ENCODE measurements at regions of chr9 and their contacts with region 1.

Region 1: GRCh38 chr9:34126207-34127034 is at the start of gene DCAF12:
- DNase-seq: peak; percentile 86 to 93 (median 92)
- H3K4me3 ChIP-seq: peak within 1 kb of the TSS; percentile 85 to 94 (median 86)
- H3K4me3 Mint-ChIP-seq: peak within 1 kb of the TSS; percentile 92
- H3K27ac ChIP-seq: peak within 1 kb of the TSS; percentile 71 to 83
- H3K27ac Mint-ChIP-seq: peak within 1 kb of the TSS; percentile 94 to 98 (median 97)
- H3K4me1 ChIP-seq: peaks cover 32 to 42% of the 10 kb centered on the region in 2 donors
- H3K4me1 Mint-ChIP-seq: peaks cover 44% of the 10 kb centered on the region
- H3K27me3 ChIP-seq: no peaks in the 10 kb centered on the region
- H3K27me3 Mint-ChIP-seq: peaks cover 0 to 6% (median 0%) of the 10 kb centered on the region in 3 donors
- CTCF ChIP-seq: no peak
- polyA plus RNA-seq, gene DCAF12: 14.6 to 35.5 (median 22.4) TPM

Region 2: DNA sequence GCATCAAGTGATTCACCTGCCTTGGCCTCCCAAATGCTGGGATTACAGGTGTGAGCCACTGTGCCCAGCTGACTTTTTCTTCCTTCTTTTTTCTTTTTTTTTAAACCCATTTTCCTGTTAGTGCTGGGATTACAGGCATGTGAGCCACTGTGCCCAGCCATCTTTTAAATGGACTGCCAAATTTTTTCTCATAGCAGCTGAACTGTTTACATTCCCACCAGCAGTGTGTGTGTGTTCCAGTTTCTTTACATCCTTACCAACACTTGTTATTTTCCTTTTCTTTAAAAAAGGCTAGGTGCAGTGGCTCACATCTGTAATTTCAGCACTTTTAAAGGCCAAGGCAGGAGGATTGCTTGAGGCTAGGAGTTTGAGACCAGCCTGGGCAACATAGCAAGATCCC is 232.6 kb before region 1 on chr9:
- intact Hi-C with region 1: no loop called
- DNase-seq: no peak
- H3K4me3 ChIP-seq: no peak overlapping the region
- H3K4me3 Mint-ChIP-seq: no peak overlapping the region
- H3K27ac ChIP-seq: no peak overlapping the region
- H3K27ac Mint-ChIP-seq: no peak overlapping the region
- H3K4me1 ChIP-seq: no peaks in the 10 kb centered on the region
- H3K4me1 Mint-ChIP-seq: peaks cover 2% of the 10 kb centered on the region
- H3K27me3 ChIP-seq: no peaks in the 10 kb centered on the region
- H3K27me3 Mint-ChIP-seq: no peaks in the 10 kb centered on the region
- CTCF ChIP-seq: no peak

Region 3: DNA sequence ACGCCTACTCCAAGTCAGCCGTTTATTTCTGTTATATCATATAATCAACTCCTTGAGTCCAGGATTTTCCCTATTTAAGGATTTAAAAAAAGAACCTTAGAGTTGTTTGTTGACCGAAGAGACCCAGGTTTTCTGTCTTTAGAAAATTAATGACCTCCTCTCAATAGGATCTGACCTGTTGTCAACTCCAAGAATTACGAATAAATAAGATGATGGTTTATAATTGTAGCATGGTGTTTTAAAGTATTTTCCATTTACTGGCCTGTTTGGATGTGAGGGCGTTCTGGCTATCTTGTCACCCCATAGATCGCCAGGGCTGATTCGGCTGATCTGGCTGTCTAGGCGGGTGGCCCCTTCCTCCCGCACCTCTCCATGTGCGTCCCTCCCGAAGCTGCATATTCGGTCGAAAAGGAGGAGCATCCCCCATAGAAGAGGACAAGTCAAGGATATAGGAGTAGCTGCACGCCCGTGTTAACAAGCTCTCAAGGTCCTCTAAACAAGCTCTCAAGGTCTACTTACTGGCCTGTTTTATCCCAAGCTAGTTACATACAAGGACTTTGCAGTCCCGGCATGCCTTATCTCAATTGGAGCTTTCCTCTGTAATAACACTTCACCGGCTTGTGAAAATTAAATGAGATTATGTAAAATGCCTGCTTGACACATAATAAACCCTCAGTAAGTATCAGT is 76.6 kb before region 1 on chr9:
- intact Hi-C with region 1: loop called in 1 of 2 experiments (anchors 10 kb)
- DNase-seq: no peak
- H3K4me3 ChIP-seq: peak overlapping the region; percentile 59 to 98 (median 96)
- H3K4me3 Mint-ChIP-seq: peak overlapping the region; percentile 97 to 99
- H3K27ac ChIP-seq: peak overlapping the region in 1 of 2 donors; percentile 99
- H3K27ac Mint-ChIP-seq: peak overlapping the region; percentile 42 to 100 (median 100)
- H3K4me1 ChIP-seq: peaks cover 23 to 31% of the 10 kb centered on the region in 2 donors
- H3K4me1 Mint-ChIP-seq: peaks cover 26% of the 10 kb centered on the region
- H3K27me3 ChIP-seq: no peaks in the 10 kb centered on the region
- H3K27me3 Mint-ChIP-seq: peaks cover 0 to 1% (median 0%) of the 10 kb centered on the region in 3 donors
- CTCF ChIP-seq: no peak

Region 4: DNA sequence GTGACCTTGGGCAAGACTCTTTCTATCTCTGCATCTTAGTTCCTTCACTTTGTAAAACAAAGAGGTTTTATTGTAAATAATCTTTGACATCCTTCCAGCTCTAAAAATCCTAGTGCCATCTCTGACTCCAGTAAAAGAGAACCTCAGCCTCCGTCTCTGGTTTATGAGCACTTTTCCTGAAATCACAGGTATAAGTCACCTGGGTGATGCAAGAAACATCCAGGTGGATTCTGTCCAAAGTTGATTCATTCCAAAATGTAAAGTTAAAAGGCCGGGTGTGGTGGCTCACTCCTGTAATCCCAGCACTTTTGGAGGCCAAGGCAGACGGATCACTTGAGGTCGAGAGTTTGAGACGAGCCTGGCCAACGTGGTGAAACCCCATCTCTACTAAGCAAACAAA is 56.6 kb before region 1 on chr9:
- intact Hi-C with region 1: no loop called
- DNase-seq: no peak
- H3K4me3 ChIP-seq: no peak overlapping the region
- H3K4me3 Mint-ChIP-seq: no peak overlapping the region
- H3K27ac ChIP-seq: no peak overlapping the region
- H3K27ac Mint-ChIP-seq: no peak overlapping the region
- H3K4me1 ChIP-seq: no peaks in the 10 kb centered on the region
- H3K4me1 Mint-ChIP-seq: no peaks in the 10 kb centered on the region
- H3K27me3 ChIP-seq: no peaks in the 10 kb centered on the region
- H3K27me3 Mint-ChIP-seq: peaks cover 0 to 4% (median 0%) of the 10 kb centered on the region in 3 donors
- CTCF ChIP-seq: no peak

Region 5: DNA sequence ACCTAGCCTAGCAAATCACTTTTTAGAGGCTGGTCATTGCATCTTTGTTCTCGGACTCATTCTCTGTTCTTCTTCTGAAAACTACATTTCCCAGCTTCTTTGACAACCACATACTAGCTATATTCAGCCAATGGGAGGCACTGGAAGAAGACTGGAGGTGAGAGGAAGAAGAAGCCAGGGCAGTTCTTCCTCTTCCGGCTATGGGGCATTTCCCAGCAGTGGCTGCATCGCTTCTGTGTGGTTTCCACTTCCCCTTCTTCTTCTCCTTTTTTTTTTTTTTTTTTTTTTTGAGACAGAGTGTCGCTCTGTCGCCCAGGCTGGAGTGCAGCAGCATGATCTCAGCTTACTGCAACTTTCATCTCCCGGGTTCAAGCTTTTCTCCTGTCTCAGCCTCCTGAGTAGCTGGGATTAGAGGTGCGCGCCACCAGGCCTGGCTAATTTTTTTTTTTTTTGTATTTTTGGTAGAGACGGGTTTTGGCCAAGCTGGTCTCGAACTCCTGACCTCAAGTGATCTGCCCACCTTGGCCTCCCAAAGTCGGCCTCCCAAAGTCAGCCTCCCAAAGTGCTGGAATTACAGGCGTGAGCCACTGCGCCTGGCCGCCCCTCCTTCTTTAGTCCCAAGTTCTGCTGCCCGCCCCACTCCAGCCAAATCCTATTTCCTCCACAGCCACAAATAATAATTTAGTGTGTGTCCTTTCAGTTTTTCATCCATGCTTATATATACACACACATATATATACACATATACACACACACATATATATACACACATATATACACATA is 45.5 kb after region 1 on chr9:
- intact Hi-C with region 1: loop called (anchors 2 to 5 kb)
- DNase-seq: peak; percentile 89 to 95 (median 95)
- H3K4me3 ChIP-seq: peak overlapping the region in 1 of 3 experiments; percentile 46
- H3K4me3 Mint-ChIP-seq: peak overlapping the region; percentile 39 to 61
- H3K27ac ChIP-seq: peak overlapping the region; percentile 34 to 52
- H3K27ac Mint-ChIP-seq: peak overlapping the region; percentile 63 to 93 (median 85)
- H3K4me1 ChIP-seq: peaks cover 19 to 21% of the 10 kb centered on the region in 2 donors
- H3K4me1 Mint-ChIP-seq: peaks cover 19% of the 10 kb centered on the region
- H3K27me3 ChIP-seq: no peaks in the 10 kb centered on the region
- H3K27me3 Mint-ChIP-seq: peaks cover 0 to 9% (median 2%) of the 10 kb centered on the region in 3 donors
- CTCF ChIP-seq: no peak

Region 6: GRCh38 chr9:34190996-34191892 is 64.8 kb after region 1 on chr9:
- intact Hi-C with region 1: loop called in 1 of 2 experiments (anchors 5 kb)
- DNase-seq: no peak
- H3K4me3 ChIP-seq: no peak overlapping the region
- H3K4me3 Mint-ChIP-seq: no peak overlapping the region
- H3K27ac ChIP-seq: peak overlapping the region in 1 of 2 donors; percentile 21
- H3K27ac Mint-ChIP-seq: peak overlapping the region in 5 of 7 donors; percentile 30 to 70 (median 57)
- H3K4me1 ChIP-seq: peaks cover 21 to 31% of the 10 kb centered on the region in 2 donors
- H3K4me1 Mint-ChIP-seq: peaks cover 35% of the 10 kb centered on the region
- H3K27me3 ChIP-seq: no peaks in the 10 kb centered on the region
- H3K27me3 Mint-ChIP-seq: no peaks in the 10 kb centered on the region
- CTCF ChIP-seq: no peak

Region 7: DNA sequence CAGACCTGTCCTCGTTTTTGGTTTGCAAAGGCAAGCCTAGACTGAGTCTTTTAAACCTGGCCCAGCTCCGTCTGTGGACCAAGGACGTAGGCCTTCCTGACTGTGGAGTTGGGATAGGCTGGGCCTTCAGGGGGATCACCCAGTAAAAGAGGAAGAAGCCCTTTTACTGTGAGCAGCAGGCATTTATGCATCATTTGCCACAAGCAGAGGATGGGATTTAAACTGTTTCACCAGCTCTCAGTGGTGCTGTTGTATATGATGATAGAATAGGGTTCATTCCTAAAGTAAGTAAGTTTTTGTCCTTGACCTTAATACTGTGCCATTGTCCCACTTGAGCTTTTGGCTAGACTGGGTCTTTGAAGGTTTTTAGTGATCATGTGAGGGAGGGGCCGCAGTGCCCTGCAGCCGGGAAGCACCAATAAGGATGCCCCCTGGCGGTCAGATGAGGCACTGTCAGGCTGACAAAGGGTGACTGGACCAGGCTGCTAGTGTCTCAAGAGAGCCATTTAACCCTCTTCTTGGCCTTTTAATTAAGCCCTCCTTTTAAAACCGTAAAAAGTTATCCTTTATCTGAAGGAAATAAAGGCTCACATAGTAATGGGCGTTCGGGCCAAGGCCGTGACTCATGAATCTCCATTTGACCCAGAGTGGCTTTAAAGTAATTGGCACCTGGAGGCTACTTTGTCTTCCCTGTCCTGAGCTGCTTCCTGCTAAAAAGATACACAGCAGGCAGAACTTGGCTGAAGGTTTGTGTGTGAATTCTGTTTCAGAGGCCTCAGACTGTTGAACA is 126.4 kb after region 1 on chr9:
- intact Hi-C with region 1: loop called (anchors 10 kb)
- DNase-seq: peak; percentile 44 to 66 (median 62)
- H3K4me3 ChIP-seq: no peak overlapping the region
- H3K4me3 Mint-ChIP-seq: no peak overlapping the region
- H3K27ac ChIP-seq: peak overlapping the region in 1 of 2 donors; percentile 56
- H3K27ac Mint-ChIP-seq: peak overlapping the region; percentile 48 to 83 (median 65)
- H3K4me1 ChIP-seq: no peaks in the 10 kb centered on the region
- H3K4me1 Mint-ChIP-seq: no peaks in the 10 kb centered on the region
- H3K27me3 ChIP-seq: no peaks in the 10 kb centered on the region
- H3K27me3 Mint-ChIP-seq: no peaks in the 10 kb centered on the region
- CTCF ChIP-seq: peak; percentile 88

Region 8: DNA sequence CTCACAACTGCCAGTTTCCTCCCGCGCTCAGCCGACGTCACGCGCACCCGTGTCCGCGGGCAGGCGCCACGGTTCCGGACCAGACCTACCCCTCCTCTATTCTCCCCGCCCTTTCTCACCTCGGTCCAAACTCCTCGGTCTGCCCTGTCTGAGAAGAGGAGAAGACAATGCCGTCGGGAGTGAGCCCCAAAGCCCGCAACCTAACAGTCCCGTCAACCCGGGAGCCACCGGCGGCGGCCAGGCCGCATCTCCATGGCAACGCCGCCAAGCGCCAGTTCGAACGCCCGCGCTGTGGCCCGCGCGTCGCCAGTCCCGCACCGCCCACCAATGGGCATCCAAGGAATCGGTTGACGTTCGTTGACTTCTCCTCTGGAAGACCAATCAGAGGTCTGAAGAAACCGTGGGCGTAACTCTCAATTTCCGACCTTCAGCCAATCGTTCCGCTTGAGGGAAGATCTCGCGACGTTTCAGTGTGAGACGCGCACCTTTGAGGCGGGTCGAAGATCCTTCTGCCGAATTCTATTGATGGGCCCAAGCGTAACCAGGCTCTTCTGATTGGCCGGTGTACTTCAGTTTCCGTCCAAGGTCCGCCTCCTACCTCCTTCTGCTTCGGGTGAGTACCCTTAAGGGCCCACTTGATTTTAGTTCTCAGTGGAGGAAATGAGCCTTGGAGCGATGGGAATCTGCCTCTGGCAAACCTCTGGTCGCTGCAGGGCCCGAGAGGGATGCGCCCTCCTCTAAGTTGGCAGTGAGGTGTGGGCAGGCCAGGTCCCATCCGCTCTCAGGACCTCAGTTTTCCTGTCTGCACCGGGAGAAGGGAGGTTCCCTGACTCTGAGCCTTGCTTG is 202.8 kb after region 1 on chr9 and contains the starts of genes KIF24 and NUDT2:
- intact Hi-C with region 1: loop called in 1 of 2 experiments (anchors 5 kb)
- DNase-seq: peak; percentile 99 to 100 (median 100)
- H3K4me3 ChIP-seq: peak within 1 kb of the TSS; percentile 86 to 99 (median 98)
- H3K4me3 Mint-ChIP-seq: peak within 1 kb of the TSS; percentile 95 to 99
- H3K27ac ChIP-seq: peak within 1 kb of the TSS; percentile 91 to 95
- H3K27ac Mint-ChIP-seq: peak within 1 kb of the TSS; percentile 94 to 99 (median 97)
- H3K4me1 ChIP-seq: peaks cover 30 to 44% of the 10 kb centered on the region in 2 donors
- H3K4me1 Mint-ChIP-seq: peaks cover 40% of the 10 kb centered on the region
- H3K27me3 ChIP-seq: no peaks in the 10 kb centered on the region
- H3K27me3 Mint-ChIP-seq: peaks cover 0 to 2% (median 2%) of the 10 kb centered on the region in 3 donors
- CTCF ChIP-seq: no peak
- polyA plus RNA-seq, gene KIF24: 0.13 to 0.31 TPM in 2 of 3 donors, not detected in the other
- polyA plus RNA-seq, gene NUDT2: 24.4 to 56.9 (median 38.0) TPM

Measured in CD14-positive monocyte (primary cell).